Naive thymus-derived CD4-positive, alpha-beta T cell (primary cell): ENCODE measurements at regions of chr11 and their contacts with region 1.

Region 1: DNA sequence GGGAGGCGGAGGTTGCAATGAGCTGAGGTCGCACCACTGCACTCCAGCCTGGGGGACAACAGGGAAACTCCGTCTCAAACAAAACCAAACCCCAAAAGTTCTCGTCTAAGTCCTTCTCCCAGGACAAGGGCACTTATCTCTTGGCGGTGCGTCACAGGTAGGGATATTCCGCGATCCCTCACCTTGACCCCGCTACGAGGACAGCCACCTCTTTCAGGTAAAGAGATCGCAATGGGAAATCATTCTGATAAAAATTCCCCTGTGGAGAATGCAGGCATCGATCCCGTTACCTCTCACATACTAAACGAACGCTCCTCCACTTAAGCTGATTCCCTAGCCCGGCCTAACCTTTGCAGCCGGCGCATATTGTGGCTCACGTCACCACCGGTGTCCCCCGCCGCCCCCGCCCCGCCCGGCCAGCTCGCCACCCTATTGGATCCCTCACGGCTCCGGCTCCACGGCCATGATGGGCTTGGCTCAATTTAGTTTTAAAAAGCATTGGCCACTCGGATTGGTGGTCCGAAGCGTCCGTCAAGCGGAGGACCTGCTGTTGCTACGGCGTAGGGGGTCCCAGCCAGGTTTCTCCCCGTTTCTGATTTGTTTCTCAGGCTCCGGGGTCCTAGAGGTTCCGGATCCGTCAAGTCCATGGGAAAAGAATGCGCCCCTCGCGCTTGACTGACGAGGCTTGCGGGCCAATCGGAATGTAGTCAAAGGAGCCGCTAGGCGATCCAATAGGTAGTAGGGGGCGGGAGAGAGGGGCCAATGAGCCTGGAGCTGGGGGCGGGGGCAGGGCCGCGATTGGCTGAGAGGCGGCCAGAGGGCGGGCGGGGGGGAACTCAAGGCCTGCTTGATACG is 439 bp upstream of the PPP6R3 start:
- DNase-seq: peak; percentile 90 to 97 (median 96)
- ATAC-seq: peak; percentile 95
- H3K4me3 ChIP-seq: peak overlapping the region; percentile 86
- H3K4me3 Mint-ChIP-seq: peak overlapping the region; percentile 81 to 98 (median 96)
- H3K27ac ChIP-seq: peak overlapping the region; percentile 90
- H3K27ac Mint-ChIP-seq: peak overlapping the region; percentile 92 to 99 (median 99)
- H3K4me1 ChIP-seq: peaks cover 19 to 26% of the 10 kb centered on the region in 2 donors
- H3K4me1 Mint-ChIP-seq: peaks cover 26 to 45% (median 31%) of the 10 kb centered on the region in 7 donors
- H3K27me3 ChIP-seq: no peaks in the 10 kb centered on the region
- H3K27me3 Mint-ChIP-seq: peaks cover 0 to 2% (median 0%) of the 10 kb centered on the region in 5 donors

Region 2: GRCh38 chr11:68121067-68121899 is 338.8 kb before region 1 on chr11 and contains the start of gene CHKA:
- CTCF ChIA-PET with region 1: no interaction called
- POLR2A ChIA-PET with region 1: no interaction called
- intact Hi-C with region 1: loop called (anchors 5 kb)
- DNase-seq: peak; percentile 69 to 95 (median 80)
- ATAC-seq: peak; percentile 91
- H3K4me3 ChIP-seq: peak within 1 kb of the TSS; percentile 79
- H3K4me3 Mint-ChIP-seq: peak within 1 kb of the TSS; percentile 72 to 90 (median 87)
- H3K27ac ChIP-seq: peak within 1 kb of the TSS; percentile 68
- H3K27ac Mint-ChIP-seq: peak within 1 kb of the TSS; percentile 28 to 92 (median 84)
- H3K4me1 ChIP-seq: peaks cover 0 to 11% of the 10 kb centered on the region in 2 donors
- H3K4me1 Mint-ChIP-seq: peaks cover 5 to 19% (median 13%) of the 10 kb centered on the region in 7 donors
- H3K27me3 ChIP-seq: no peaks in the 10 kb centered on the region
- H3K27me3 Mint-ChIP-seq: peaks cover 0 to 21% (median 0%) of the 10 kb centered on the region in 5 donors
- total RNA-seq, gene CHKA: 6.0 to 31.3 (median 7.3) TPM

Region 3: GRCh38 chr11:68354148-68354872 is 105.8 kb before region 1 on chr11:
- CTCF ChIA-PET with region 1: no interaction called
- POLR2A ChIA-PET with region 1: no interaction called
- intact Hi-C with region 1: no loop called
- DNase-seq: no peak
- ATAC-seq: no peak
- H3K4me3 ChIP-seq: no peak overlapping the region
- H3K4me3 Mint-ChIP-seq: no peak overlapping the region
- H3K27ac ChIP-seq: no peak overlapping the region
- H3K27ac Mint-ChIP-seq: no peak overlapping the region
- H3K4me1 ChIP-seq: no peaks in the 10 kb centered on the region
- H3K4me1 Mint-ChIP-seq: no peaks in the 10 kb centered on the region
- H3K27me3 ChIP-seq: no peaks in the 10 kb centered on the region
- H3K27me3 Mint-ChIP-seq: no peaks in the 10 kb centered on the region

Region 4: GRCh38 chr11:68447015-68447801 is 12.9 kb before region 1 on chr11:
- CTCF ChIA-PET with region 1: no interaction called
- POLR2A ChIA-PET with region 1: interaction called, 5 read pairs
- intact Hi-C with region 1: loop called in 1 of 2 experiments (anchors 1 kb)
- DNase-seq: peak; percentile 55 to 79 (median 69)
- ATAC-seq: peak; percentile 97
- H3K4me3 ChIP-seq: no peak overlapping the region
- H3K4me3 Mint-ChIP-seq: no peak overlapping the region
- H3K27ac ChIP-seq: no peak overlapping the region
- H3K27ac Mint-ChIP-seq: peak overlapping the region in 2 of 9 donors; percentile 21 to 22
- H3K4me1 ChIP-seq: peaks cover 0 to 3% of the 10 kb centered on the region in 2 donors
- H3K4me1 Mint-ChIP-seq: peaks cover 0 to 7% (median 4%) of the 10 kb centered on the region in 7 donors
- H3K27me3 ChIP-seq: no peaks in the 10 kb centered on the region
- H3K27me3 Mint-ChIP-seq: no peaks in the 10 kb centered on the region

Region 5: GRCh38 chr11:68528630-68529029 is 68.5 kb after region 1 on chr11:
- CTCF ChIA-PET with region 1: interaction called, 3 read pairs
- POLR2A ChIA-PET with region 1: no interaction called
- intact Hi-C with region 1: loop called in 1 of 2 experiments (anchors 5 kb)
- DNase-seq: peak in 6 of 9 donors; percentile 4 to 31 (median 18)
- ATAC-seq: peak; percentile 70
- H3K4me3 ChIP-seq: no peak overlapping the region
- H3K4me3 Mint-ChIP-seq: peak overlapping the region; percentile 29 to 74 (median 56)
- H3K27ac ChIP-seq: peak overlapping the region; percentile 37
- H3K27ac Mint-ChIP-seq: peak overlapping the region; percentile 65 to 92 (median 81)
- H3K4me1 ChIP-seq: peaks cover 17 to 24% of the 10 kb centered on the region in 2 donors
- H3K4me1 Mint-ChIP-seq: peaks cover 56 to 99% (median 93%) of the 10 kb centered on the region in 7 donors
- H3K27me3 ChIP-seq: no peaks in the 10 kb centered on the region
- H3K27me3 Mint-ChIP-seq: no peaks in the 10 kb centered on the region

Region 6: DNA sequence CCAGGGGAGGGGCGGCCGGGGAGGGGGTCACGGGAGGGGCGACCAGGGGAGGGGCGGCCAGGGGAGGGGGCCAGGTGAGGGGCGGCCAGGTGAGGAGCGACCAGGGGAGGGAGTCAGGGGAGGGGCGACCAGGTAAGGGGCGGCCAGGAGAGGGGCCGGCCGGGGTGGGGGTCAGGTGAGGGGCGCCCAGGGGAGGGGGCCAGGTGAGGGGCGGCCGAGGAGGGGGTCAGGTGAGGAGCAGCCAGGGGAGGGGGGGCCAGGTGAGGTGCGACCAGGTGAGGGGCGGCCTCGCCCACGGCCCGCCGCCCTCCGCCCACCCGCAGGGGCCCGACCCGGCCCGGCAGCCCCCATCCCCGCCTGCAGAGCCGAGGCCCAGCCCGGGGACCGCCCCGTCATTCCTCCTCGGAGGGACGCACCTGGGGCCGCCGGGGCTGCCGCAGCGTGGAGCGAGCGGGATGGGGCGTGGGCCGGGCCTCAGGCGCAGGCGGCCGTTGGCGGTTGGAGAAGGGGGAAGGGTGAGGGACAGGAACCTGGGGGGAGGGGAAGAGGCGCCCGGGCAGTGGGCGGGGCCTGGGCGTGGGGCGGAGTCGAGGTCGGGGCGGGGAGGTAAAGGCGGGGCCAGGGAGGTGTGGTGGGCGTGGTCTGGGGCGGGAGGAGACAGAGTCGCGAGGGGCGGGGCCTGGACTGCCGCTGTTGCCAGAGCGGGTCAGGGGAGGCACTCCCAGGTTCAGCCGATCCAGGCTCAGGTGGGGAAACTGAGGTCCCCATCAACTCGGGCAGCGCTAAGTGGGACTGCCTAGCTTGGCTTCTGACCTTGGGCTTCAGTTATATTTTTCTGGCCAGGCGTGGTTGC is 291.1 kb after region 1 on chr11 and contains the start of gene TESMIN:
- CTCF ChIA-PET with region 1: no interaction called
- POLR2A ChIA-PET with region 1: no interaction called
- intact Hi-C with region 1: loop called in 1 of 2 experiments (anchors 2 kb)
- DNase-seq: peak; percentile 73 to 97 (median 88)
- ATAC-seq: peak; percentile 99
- H3K4me3 ChIP-seq: peak within 1 kb of the TSS; percentile 54
- H3K4me3 Mint-ChIP-seq: peak within 1 kb of the TSS; percentile 65 to 90 (median 78)
- H3K27ac ChIP-seq: no peak within 1 kb of the TSS
- H3K27ac Mint-ChIP-seq: peak within 1 kb of the TSS in 8 of 9 donors; percentile 5 to 84 (median 66)
- H3K4me1 ChIP-seq: no peaks in the 10 kb centered on the region
- H3K4me1 Mint-ChIP-seq: peaks cover 7 to 19% (median 13%) of the 10 kb centered on the region in 7 donors
- H3K27me3 ChIP-seq: no peaks in the 10 kb centered on the region
- H3K27me3 Mint-ChIP-seq: peaks cover 0 to 7% (median 0%) of the 10 kb centered on the region in 5 donors
- total RNA-seq, gene TESMIN: 5.0 to 9.3 (median 6.6) TPM

Region 7: DNA sequence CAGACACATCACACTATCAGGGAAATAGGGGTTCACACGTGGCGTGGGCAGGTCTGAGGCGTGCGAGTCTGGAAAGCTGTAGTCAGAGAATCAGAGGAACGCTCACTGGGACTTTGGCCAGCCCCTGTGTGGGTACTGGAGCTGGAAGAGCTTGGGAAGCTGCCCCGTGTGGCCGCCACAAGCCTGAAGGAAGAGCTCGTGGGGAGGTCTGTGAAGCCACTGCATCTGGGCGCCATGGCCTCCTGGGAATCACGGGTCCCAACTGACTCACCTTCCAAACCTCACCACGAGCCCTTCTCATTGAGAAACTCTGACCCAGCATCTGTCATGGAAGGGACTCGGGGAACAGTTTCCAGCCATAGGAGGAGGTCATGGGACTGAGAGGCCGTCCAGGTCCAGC is 558.8 kb after region 1 on chr11:
- CTCF ChIA-PET with region 1: no interaction called
- POLR2A ChIA-PET with region 1: no interaction called
- intact Hi-C with region 1: no loop called
- DNase-seq: no peak
- ATAC-seq: no peak
- H3K4me3 ChIP-seq: no peak overlapping the region
- H3K4me3 Mint-ChIP-seq: no peak overlapping the region
- H3K27ac ChIP-seq: no peak overlapping the region
- H3K27ac Mint-ChIP-seq: no peak overlapping the region
- H3K4me1 ChIP-seq: no peaks in the 10 kb centered on the region
- H3K4me1 Mint-ChIP-seq: no peaks in the 10 kb centered on the region
- H3K27me3 ChIP-seq: no peaks in the 10 kb centered on the region
- H3K27me3 Mint-ChIP-seq: peaks cover 0 to 14% (median 3%) of the 10 kb centered on the region in 5 donors

Region 8: DNA sequence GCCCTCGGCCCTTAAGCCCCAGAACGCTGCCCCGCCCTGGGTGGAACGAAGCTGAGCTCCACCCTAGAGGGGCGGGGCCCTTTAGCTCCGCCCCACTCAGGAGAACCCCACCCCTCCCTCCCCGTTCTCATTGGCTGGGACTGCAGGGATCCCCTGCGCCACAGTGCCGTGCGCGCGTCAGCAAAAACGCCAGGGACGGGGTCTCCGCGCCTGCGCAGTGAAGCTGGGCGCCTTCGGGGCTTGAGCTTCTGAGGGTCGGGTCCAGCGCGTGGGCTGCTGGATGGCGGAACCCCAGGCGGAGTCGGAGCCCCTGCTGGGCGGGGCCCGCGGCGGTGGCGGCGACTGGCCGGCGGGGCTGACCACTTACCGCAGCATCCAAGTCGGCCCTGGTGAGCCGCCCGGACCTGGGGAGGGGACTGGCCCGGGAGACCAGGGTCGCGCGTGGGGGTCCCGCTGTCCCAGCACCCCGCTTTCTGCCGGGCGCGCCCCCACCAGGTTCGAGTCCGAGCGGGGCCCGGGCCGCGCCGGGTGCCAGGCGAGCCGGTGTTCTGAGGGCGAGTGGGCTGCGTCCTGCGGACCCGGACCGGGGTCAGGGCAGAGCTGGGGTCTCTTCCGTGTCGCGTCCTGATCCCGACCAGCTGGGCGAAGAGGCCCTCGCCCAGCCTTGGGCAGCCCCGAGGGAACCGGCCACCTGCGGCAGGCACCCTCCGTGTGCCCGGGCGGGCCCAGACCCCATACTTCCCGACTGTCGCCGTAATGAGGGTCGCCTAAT is 588.8 kb after region 1 on chr11 and contains the start of gene TPCN2:
- CTCF ChIA-PET with region 1: no interaction called
- POLR2A ChIA-PET with region 1: no interaction called
- intact Hi-C with region 1: loop called in 1 of 2 experiments (anchors 2 kb)
- DNase-seq: peak; percentile 87 to 93 (median 91)
- ATAC-seq: peak; percentile 99
- H3K4me3 ChIP-seq: peak within 1 kb of the TSS; percentile 85
- H3K4me3 Mint-ChIP-seq: peak within 1 kb of the TSS; percentile 75 to 87 (median 82)
- H3K27ac ChIP-seq: peak within 1 kb of the TSS; percentile 98
- H3K27ac Mint-ChIP-seq: peak within 1 kb of the TSS; percentile 82 to 94 (median 89)
- H3K4me1 ChIP-seq: peaks cover 12 to 16% of the 10 kb centered on the region in 2 donors
- H3K4me1 Mint-ChIP-seq: peaks cover 4 to 35% (median 29%) of the 10 kb centered on the region in 7 donors
- H3K27me3 ChIP-seq: no peaks in the 10 kb centered on the region
- H3K27me3 Mint-ChIP-seq: peaks cover 0 to 27% (median 0%) of the 10 kb centered on the region in 5 donors
- total RNA-seq, gene TPCN2: 11.9 to 29.4 (median 21.3) TPM

Region 9: DNA sequence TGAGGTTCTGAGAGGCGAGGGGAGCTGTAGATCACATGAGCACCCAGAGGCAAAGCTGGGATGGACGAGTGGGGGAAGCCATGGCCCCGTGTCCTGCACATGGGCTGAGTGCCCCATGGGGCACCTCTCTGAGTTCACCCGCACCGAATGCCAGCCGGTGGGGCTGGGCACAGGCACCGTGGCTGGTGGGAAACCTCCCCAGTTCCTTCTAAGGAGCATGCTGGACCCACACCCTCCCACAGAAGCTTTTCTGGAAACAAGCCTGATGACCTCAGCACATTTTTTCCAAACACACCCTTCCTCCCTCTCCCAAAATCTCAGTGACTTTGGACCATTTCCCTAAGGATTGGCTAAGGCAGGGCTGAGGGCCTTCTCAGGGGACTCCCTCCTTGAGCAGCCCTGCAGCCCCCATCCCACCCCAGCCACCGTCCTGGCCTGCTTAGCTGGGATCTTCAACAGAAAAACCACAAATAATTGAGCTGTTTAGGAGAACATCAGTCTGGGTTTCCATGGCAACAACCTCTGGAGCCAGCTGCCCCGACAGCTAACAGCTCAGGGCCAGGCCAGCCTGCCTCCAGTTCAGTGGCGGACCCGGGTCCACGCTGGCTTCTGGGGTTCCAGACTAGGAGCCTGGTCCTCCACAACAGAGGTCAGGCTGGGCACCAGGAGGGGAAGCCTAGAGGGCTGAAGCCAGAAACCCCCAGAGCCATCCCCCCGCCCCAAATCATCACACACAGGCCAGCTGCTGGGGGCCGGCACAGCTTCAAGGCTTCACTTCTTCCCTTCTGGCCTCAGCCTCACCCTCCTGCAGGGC is 1003.3 kb after region 1 on chr11:
- CTCF ChIA-PET with region 1: no interaction called
- POLR2A ChIA-PET with region 1: no interaction called
- intact Hi-C with region 1: no loop called
- DNase-seq: no peak
- ATAC-seq: no peak
- H3K4me3 ChIP-seq: no peak overlapping the region
- H3K4me3 Mint-ChIP-seq: no peak overlapping the region
- H3K27ac ChIP-seq: no peak overlapping the region
- H3K27ac Mint-ChIP-seq: no peak overlapping the region
- H3K4me1 ChIP-seq: no peaks in the 10 kb centered on the region
- H3K4me1 Mint-ChIP-seq: peaks cover 0 to 4% (median 0%) of the 10 kb centered on the region in 7 donors
- H3K27me3 ChIP-seq: no peaks in the 10 kb centered on the region
- H3K27me3 Mint-ChIP-seq: peaks cover 0 to 19% (median 9%) of the 10 kb centered on the region in 5 donors